ENCODE measurements at regions of chr1 and their contacts with region 1.

Region 1: GRCh38 chr1:181587870-181588438 is 104.6 kb downstream of the CACNA1E start:
- DNase-seq: peak in 1 of 2 experiments; percentile 49
- H3K4me3 ChIP-seq: no peak overlapping the region
- H3K27ac ChIP-seq: no peak overlapping the region
- H3K4me1 ChIP-seq: peaks cover 7 to 24% (median 14%) of the 10 kb centered on the region in 4 experiments; a peak in 6 of 7 replicates
- H3K27me3 ChIP-seq: no peaks in the 10 kb centered on the region
- CTCF ChIP-seq: peak; percentile 32 to 56 (median 47)
- EP300 ChIP-seq: no peak
- POLR2A ChIP-seq: no peak
- RAD21 ChIP-seq: peak; percentile 11 to 30; a peak in 2 of 4 replicates

Region 2: GRCh38 chr1:181620183-181620582 is 32.2 kb after region 1 on chr1:
- CTCF ChIA-PET with region 1: interaction called, 11 read pairs
- POLR2A ChIA-PET with region 1: no interaction called
- DNase-seq: no peak
- H3K4me3 ChIP-seq: no peak overlapping the region
- H3K27ac ChIP-seq: no peak overlapping the region
- H3K4me1 ChIP-seq: no peaks in the 10 kb centered on the region
- H3K27me3 ChIP-seq: no peaks in the 10 kb centered on the region
- CTCF ChIP-seq: no peak
- EP300 ChIP-seq: no peak
- POLR2A ChIP-seq: no peak
- RAD21 ChIP-seq: no peak

Measured in H1 (cell line).